Adrenal gland (tissue), 19 donors: ENCODE measurements at regions of chr18 and their contacts with region 1.

Region 1: DNA sequence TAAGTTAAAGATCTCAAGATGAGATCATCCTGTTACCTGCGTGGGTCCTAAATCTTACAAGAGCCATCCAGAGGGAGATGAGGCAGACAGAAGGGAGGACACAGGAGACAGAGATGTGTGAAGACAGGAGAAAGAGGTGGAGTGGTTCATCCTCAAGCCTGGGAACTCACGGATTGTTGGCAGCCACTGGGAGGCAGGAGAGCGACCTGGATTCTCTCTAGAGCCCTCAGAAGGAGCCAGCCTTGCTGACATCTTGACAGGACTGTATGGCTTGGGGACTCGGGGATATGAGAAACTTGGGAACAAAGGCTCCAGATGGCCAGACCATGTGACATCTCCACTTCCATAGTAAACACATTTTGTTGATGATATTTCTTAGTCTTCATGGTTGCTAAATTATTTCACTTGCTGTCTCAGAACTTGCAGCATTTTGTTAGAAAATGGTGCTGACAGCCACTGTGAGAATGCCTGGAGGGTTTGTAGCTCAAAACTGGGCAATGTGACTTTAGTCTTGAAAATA is 57.8 kb upstream of the MC2R start:
- DNase-seq: no peak
- H3K4me3 ChIP-seq: no peak overlapping the region
- H3K27ac ChIP-seq: no peak overlapping the region
- H3K4me1 ChIP-seq: no peaks in the 10 kb centered on the region
- H3K27me3 ChIP-seq: no peaks in the 10 kb centered on the region
- CTCF ChIP-seq: no peak
- POLR2A ChIP-seq: no peak

Region 2: GRCh38 chr18:13915995-13916431 is 57.1 kb before region 1 on chr18:
- intact Hi-C with region 1: loop called in 1 of 2 experiments (anchors 10 kb)
- DNase-seq: peak in 6 of 7 donors; percentile 72 to 93 (median 82)
- H3K4me3 ChIP-seq: no peak overlapping the region
- H3K27ac ChIP-seq: peak overlapping the region; percentile 58 to 89 (median 79)
- H3K4me1 ChIP-seq: peaks cover 26 to 42% of the 10 kb centered on the region in 2 donors
- H3K27me3 ChIP-seq: no peaks in the 10 kb centered on the region
- CTCF ChIP-seq: no peak
- POLR2A ChIP-seq: no peak